Ovary (tissue), 10 donors: ENCODE measurements at regions of chr7 and their contacts with region 1.

Region 1: GRCh38 chr7:13262929-13263530 is 575.6 kb downstream of the ARL4A start:
- DNase-seq: no peak
- H3K4me3 ChIP-seq: no peak overlapping the region
- H3K27ac ChIP-seq: no peak overlapping the region
- H3K4me1 ChIP-seq: no peaks in the 10 kb centered on the region
- H3K27me3 ChIP-seq: no peaks in the 10 kb centered on the region
- CTCF ChIP-seq: peak; percentile 44 to 71 (median 49)
- EP300 ChIP-seq: no peak
- POLR2A ChIP-seq: no peak

Region 2: GRCh38 chr7:12524794-12525386 is 738.1 kb before region 1 on chr7:
- intact Hi-C with region 1: loop called in 3 of 4 experiments (anchors 10 kb)
- DNase-seq: no peak
- H3K4me3 ChIP-seq: no peak overlapping the region
- H3K27ac ChIP-seq: no peak overlapping the region
- H3K4me1 ChIP-seq: no peaks in the 10 kb centered on the region
- H3K27me3 ChIP-seq: no peaks in the 10 kb centered on the region
- CTCF ChIP-seq: peak in 1 of 3 donors; percentile 29
- EP300 ChIP-seq: no peak
- POLR2A ChIP-seq: no peak

Region 3: DNA sequence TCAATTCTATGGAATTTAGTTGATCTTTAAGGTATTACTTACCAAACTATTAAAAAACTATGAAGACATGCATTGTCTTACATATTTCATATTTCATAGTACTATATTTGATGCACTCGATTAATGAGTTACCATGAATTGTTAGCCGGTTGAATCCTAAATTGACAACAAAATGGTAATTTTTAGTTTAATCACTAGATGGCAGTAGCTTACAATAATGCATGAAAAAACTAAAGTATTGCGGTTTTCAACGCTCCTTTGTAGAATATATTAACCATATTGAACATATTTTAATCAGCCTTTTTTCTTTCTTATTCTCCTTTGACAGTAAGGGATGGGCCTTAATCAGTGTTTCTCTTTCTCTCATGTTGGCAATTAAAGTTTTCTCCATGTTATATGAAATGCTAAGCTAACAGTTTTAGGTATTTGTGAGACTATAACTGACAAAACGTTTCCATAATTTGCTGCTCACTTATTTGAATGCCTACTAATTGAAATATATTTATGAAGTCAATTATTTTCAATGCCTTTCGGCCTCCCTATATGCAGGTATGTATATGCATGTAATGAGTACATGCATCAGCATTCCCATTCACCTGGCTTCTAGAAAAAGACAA is 624.1 kb before region 1 on chr7:
- intact Hi-C with region 1: loop called (anchors 10 kb)
- DNase-seq: no peak
- H3K4me3 ChIP-seq: no peak overlapping the region
- H3K27ac ChIP-seq: no peak overlapping the region
- H3K4me1 ChIP-seq: no peaks in the 10 kb centered on the region
- H3K27me3 ChIP-seq: no peaks in the 10 kb centered on the region
- CTCF ChIP-seq: peak; percentile 7 to 15 (median 10)
- EP300 ChIP-seq: no peak
- POLR2A ChIP-seq: no peak

Region 4: DNA sequence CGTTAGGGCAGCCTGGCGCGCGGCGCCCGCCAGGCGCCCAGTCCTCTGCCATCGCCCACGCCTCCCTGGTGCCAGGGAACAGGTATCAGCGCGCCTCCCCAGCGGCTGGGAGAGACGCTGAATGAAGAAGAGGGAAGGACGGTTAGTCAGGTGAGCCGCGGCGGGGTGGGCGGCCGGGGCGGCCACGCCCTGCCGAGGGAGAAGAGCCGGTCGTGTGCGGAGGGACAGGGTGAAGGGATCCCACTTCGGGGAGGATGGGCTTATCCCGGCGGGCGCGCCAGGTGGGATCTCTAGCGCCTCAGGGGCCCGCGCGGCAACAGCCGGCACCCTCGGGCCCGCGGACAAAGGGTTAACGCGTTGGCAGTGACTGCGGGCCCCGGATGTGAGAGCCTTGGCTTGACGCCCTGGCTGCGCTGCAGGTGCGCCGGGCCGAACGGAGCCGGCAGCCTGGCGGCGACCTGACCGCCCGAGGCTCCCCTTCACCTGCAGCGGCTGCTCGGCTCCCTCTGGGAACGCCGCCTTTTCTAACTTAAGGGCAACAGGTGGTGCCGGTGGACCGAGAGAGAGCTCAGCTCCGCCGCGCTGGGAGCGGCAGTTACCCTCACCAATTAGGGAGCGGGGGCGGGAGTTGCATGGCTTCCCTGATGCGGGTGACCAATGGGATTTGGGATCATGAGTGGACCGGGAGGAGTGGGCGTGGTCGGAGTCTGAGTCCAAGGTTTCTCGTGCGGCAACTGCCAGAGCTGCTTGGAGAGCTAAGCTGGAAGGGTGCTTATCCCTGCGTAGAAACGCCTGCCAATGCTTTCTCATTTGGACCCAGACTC is 575.9 kb before region 1 on chr7 and contains the start of gene ARL4A:
- intact Hi-C with region 1: loop called in 1 of 4 experiments (anchors 10 kb)
- DNase-seq: peak; percentile 94 to 99 (median 97)
- H3K4me3 ChIP-seq: peak within 1 kb of the TSS; percentile 81
- H3K27ac ChIP-seq: peak within 1 kb of the TSS; percentile 60 to 77
- H3K4me1 ChIP-seq: no peaks in the 10 kb centered on the region
- H3K27me3 ChIP-seq: no peaks in the 10 kb centered on the region
- CTCF ChIP-seq: no peak
- EP300 ChIP-seq: no peak
- POLR2A ChIP-seq: peak; percentile 50
- total RNA-seq, gene ARL4A: 4.6 to 32.2 (median 9.5) TPM